Aorta (tissue), 5 donors: ENCODE measurements at regions of chr21 and their contacts with region 1.

Region 1: DNA sequence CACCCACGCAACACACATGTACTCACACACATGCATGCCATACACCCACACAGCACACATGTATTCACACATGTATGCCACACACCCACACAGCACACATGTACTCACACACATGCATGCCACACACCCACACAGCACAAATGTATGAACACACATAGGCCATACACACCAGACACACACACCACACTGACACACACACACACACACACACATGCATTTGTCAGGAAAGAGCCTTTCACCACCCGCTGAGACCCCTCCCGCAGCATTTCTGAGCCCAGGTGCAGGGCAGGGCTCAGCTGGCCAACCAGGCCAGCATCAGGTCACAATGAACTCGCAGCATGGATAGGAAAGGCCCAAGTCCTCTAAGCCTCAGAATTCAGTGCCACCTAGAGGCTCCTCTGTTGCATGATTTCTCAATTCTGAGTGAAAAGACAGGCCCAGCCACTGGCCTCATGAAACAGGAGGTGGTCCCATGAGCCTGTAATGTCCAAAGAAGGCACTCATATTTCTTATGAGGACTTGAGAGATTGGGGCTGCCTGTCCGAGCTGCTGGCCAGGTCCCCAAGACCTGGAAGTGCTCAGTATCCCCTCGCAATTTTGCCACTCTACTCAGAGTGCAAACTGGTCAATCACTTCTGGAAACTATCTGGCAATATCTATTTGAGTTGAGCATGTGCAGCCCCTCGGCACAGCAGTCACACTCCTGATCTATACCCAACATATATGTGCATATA is 57.3 kb downstream of the PSMG1 start:
- DNase-seq: no peak
- ATAC-seq: peak; percentile 88
- H3K4me3 ChIP-seq: no peak overlapping the region
- H3K27ac ChIP-seq: no peak overlapping the region
- H3K4me1 ChIP-seq: no peaks in the 10 kb centered on the region
- H3K27me3 ChIP-seq: no peaks in the 10 kb centered on the region

Region 2: GRCh38 chr21:38494703-38495102 is 631.2 kb before region 1 on chr21:
- intact Hi-C with region 1: no loop called
- DNase-seq: peak; percentile 80 to 89
- ATAC-seq: peak; percentile 68
- H3K4me3 ChIP-seq: no peak overlapping the region
- H3K27ac ChIP-seq: peak overlapping the region; percentile 41 to 49
- H3K4me1 ChIP-seq: peaks cover 9 to 10% of the 10 kb centered on the region in 2 donors
- H3K27me3 ChIP-seq: no peaks in the 10 kb centered on the region

Region 3: GRCh38 chr21:38669176-38669575 is 456.7 kb before region 1 on chr21:
- intact Hi-C with region 1: loop called in 1 of 2 experiments (anchors 10 kb)
- DNase-seq: no peak
- ATAC-seq: no peak
- H3K4me3 ChIP-seq: no peak overlapping the region
- H3K27ac ChIP-seq: no peak overlapping the region
- H3K4me1 ChIP-seq: peaks cover 0 to 7% of the 10 kb centered on the region in 2 donors
- H3K27me3 ChIP-seq: no peaks in the 10 kb centered on the region

Region 4: GRCh38 chr21:38913120-38913892 is 212.6 kb before region 1 on chr21:
- intact Hi-C with region 1: loop called in 1 of 2 experiments (anchors 5 kb)
- DNase-seq: peak; percentile 75 to 93
- ATAC-seq: peak; percentile 79
- H3K4me3 ChIP-seq: no peak overlapping the region
- H3K27ac ChIP-seq: peak overlapping the region in 1 of 2 donors; percentile 30
- H3K4me1 ChIP-seq: peaks cover 0 to 3% of the 10 kb centered on the region in 2 donors
- H3K27me3 ChIP-seq: no peaks in the 10 kb centered on the region

Region 5: DNA sequence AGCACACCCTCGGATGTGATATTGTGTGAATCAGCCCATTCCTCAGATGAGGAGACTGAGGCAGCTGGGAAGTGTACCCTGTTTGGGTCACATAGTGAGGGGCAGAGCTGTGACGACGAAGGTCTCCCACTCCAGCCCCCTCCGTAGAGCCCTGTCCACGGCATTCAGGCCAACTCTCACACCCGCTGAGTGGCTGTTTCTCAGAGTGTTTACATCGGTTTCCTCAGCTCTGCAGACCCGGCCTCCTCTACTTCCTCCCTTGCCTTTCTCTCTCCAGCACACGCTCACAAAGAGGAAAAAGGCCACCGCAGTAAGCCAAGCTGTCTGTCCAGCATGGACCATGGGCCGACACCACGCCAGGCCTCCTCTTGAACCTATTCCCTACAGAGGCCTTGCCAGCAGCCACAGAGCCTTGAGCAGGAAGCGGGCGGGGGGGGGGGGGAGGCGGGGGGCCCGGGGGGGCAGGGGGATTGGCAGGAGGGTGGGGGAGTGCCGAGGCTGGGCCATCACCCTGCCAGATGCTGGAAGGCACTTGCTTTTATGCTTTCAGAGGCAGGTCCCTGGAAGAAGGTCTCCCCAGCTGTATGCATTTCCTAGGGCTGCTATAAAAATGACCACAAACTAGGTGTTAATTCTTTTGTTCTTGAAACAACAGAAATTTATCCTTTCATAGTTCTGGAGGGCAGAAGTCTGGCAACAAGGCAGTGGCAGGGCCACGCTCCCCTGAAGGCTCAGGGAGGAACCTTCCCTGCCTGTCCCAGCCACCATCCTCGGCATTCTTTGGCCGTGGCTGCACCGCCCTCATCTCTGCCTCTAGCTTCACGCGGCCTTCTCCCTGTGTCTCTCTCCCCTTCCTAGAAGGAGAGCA is 121.1 kb before region 1 on chr21:
- intact Hi-C with region 1: loop called in 1 of 2 experiments (anchors 5 kb)
- DNase-seq: peak in 1 of 2 donors; percentile 90
- ATAC-seq: peak; percentile 60
- H3K4me3 ChIP-seq: no peak overlapping the region
- H3K27ac ChIP-seq: peak overlapping the region; percentile 61 to 92
- H3K4me1 ChIP-seq: peaks cover 0 to 11% of the 10 kb centered on the region in 2 donors
- H3K27me3 ChIP-seq: no peaks in the 10 kb centered on the region

Region 6: DNA sequence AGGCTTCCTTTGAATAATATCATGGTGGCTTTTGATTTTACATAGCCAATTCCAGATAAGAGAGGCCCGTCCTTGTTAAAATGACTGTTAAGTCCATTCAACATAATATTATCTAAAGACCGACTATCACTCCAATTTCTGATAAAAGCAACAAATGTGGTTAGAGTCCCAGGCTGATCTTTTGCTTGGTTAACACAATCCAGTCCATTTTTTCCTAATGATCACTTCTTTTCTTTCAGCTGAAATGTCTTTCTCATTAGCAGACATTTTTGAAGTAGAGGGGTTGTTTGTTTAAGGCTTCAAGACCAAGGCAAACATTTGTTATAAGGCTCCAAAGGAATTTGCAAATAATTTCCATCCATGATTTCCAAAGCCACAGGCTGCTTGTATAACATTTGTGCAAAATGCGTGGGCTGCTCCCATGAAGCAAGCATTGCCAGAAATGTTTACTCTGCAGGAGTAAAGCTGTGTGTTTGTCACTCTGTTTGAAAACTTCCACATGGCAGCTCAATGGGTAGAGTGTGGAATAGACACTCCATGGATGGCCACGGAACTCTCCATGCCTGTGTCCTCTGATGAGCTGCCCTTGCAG is 54.2 kb before region 1 on chr21:
- intact Hi-C with region 1: no loop called
- DNase-seq: no peak
- ATAC-seq: no peak
- H3K4me3 ChIP-seq: no peak overlapping the region
- H3K27ac ChIP-seq: peak overlapping the region; percentile 13 to 76
- H3K4me1 ChIP-seq: peaks cover 4 to 13% of the 10 kb centered on the region in 2 donors
- H3K27me3 ChIP-seq: no peaks in the 10 kb centered on the region